GM18951 (cell line): ENCODE measurements at regions of chr2 and their contacts with region 1.

Region 1: DNA sequence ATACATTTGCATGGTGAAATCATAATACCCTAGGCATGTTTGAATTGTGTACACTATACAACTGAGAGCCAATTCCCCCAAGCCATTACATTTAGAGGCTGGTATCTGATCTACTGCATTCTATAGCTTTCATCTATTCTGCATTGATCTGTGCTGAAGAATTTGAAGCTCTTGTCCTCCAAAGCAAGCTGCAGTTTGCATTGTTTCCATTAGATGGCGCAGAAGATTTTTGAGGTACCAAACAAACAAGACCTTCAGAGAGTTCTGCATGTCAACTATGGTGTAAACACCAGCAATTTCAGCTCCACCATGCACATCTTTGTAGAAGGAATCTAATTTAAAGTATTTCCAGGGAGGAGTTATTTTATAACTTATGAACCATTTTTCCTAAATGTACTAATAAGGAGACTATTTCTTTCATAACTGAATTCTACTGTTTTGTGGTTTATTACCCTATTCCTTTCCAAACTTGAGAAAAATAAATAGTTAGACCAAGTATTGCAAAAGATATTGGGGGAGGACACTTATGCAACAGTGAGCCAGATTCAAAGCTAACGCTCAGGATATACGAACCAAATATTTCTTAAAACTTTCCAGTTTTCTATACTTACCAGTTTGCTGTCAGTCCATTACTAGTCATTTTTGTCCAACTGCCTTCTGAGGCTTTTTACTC is 761.8 kb upstream of the ACVR2A start:
- POLR2A ChIP-seq: no peak

Region 2: GRCh38 chr2:146681991-146682390 is 401.0 kb before region 1 on chr2:
- in situ Hi-C with region 1: no loop called
- POLR2A ChIP-seq: no peak

Region 3: DNA sequence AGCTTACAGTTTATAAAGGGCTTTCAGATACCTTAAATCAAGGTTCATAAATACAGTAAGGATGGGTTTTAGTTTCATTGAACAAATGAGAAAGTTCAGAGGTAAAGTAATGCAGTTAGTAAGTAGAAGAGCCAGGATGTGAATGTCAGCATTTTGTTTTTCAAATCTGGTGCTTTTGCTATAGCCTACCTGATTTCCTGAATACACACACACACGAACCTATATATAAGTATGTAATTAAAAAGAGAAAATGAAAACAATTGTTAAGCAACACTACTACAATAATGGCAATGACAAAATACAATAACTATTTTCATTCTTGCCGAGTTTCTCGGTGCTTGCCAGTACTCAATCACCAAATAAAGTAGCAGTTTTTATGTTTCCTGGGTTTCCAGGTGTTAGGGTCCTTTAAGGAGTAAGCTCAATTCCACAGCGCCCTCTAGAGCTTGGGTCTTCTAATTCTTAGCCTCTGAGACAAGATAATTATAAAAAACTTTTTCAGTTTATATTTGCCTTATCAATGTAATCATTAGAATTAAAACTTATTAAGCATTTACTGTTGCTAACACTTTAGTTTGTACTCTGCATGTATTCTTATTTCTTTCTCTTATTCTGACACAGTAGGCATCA is 248.9 kb after region 1 on chr2:
- in situ Hi-C with region 1: loop called (anchors 25 kb)
- POLR2A ChIP-seq: no peak